ENCODE measurements at regions of chr21 and their contacts with region 1.

Region 1: DNA sequence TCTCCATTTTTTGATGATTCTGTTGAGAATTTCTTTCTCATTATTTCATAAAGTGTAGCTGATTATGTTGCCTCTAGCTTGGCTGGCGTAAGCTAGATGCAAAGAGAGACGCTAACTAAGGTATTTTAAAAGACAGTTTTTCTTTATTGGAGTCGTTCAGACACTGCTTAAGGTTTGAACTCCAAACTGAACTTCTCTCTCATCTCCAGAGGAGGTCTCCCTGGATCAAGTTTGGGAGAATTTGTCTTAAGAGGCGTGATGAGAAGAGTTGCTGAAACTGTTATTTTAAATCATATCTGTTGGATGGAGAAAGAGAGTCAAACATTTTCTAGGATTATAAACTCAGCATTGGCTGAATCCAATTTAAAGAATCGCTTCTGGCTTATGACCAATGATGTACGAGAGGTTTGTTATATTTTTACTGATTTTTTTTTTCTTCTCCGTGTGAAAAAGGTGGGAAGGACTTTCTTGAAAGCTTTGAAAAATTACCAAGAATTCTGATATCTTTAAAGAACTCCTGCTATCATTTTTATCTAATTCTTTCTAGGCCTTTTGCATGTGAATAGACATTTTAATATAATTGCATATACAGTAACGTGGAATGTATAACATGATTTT is 34.0 kb downstream of the MAP3K7CL start:
- DNase-seq: no peak
- ATAC-seq: peak; percentile 53 to 81
- H3K4me3 ChIP-seq: no peak overlapping the region
- H3K27ac ChIP-seq: peak overlapping the region; percentile 51
- H3K4me1 ChIP-seq: peaks cover 36% of the 10 kb centered on the region
- H3K27me3 ChIP-seq: no peaks in the 10 kb centered on the region
- CTCF ChIP-seq: peak; percentile 71

Region 2: DNA sequence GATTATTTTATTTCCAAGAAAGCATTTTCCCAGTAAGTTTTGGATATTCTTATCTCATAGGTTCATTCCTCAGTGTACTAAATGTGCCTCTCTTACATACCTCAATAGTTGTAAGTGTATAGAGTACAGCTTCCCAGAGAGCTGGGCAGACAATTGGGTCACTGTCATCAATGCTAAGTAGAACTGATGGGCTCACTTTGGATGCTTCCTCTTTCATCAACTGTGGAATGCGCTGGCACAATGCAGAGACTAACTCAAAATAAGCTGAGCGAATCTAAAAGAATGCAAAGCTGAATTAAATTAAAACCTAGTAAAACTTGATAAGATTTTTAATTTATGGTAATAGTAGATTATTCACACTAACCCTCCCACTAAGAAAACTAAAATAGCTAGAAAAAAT is 193.3 kb before region 1 on chr21:
- intact Hi-C with region 1: no loop called
- DNase-seq: no peak
- ATAC-seq: no peak
- H3K4me3 ChIP-seq: no peak overlapping the region
- H3K27ac ChIP-seq: no peak overlapping the region
- H3K4me1 ChIP-seq: no peaks in the 10 kb centered on the region
- H3K27me3 ChIP-seq: no peaks in the 10 kb centered on the region
- CTCF ChIP-seq: no peak

Region 3: GRCh38 chr21:29342363-29342957 is 178.0 kb after region 1 on chr21:
- intact Hi-C with region 1: loop called (anchors 10 kb)
- DNase-seq: peak; percentile 53
- ATAC-seq: peak; percentile 66 to 67
- H3K4me3 ChIP-seq: no peak overlapping the region
- H3K27ac ChIP-seq: peak overlapping the region; percentile 44
- H3K4me1 ChIP-seq: peaks cover 56% of the 10 kb centered on the region
- H3K27me3 ChIP-seq: no peaks in the 10 kb centered on the region
- CTCF ChIP-seq: no peak

Region 4: DNA sequence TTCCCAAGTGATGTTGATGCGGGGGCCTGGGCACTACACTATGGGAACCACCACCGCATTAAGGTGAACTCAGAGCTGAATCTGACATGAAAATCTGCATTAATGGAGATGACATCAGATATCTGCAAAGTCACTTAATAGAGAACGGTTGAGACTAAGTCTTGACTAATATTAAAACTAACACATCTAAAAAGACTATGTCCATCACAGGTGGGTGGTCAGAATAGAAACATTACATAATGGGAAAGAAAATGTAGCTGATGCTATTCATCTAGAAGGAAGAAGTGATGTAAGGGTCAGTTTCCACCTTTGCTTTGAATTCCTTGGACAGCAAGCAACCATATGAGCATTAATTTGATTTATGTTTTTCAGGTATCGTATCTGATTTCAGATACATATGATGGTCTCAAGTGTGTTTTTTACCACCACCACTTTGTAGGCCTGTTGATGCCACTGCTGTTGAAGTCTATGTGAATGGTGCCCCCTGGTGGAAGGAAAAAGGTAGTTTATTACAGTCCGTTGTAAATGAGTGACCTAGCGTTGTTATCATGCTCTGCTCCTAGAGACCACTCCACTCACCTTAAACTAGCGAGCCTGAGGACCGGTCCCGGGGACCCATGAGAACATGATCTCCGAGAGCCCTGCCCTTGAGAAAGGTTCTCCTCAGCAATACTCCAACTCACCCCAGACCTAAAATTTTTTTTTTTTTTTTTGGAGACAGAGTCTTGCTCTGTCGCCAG is 207.8 kb after region 1 on chr21:
- intact Hi-C with region 1: loop called (anchors 5 kb)
- DNase-seq: no peak
- ATAC-seq: peak; percentile 88 to 92
- H3K4me3 ChIP-seq: no peak overlapping the region
- H3K27ac ChIP-seq: no peak overlapping the region
- H3K4me1 ChIP-seq: peaks cover 7% of the 10 kb centered on the region
- H3K27me3 ChIP-seq: no peaks in the 10 kb centered on the region
- CTCF ChIP-seq: peak; percentile 74